ENCODE measurements at regions of chr5 and their contacts with region 1.

Region 1: DNA sequence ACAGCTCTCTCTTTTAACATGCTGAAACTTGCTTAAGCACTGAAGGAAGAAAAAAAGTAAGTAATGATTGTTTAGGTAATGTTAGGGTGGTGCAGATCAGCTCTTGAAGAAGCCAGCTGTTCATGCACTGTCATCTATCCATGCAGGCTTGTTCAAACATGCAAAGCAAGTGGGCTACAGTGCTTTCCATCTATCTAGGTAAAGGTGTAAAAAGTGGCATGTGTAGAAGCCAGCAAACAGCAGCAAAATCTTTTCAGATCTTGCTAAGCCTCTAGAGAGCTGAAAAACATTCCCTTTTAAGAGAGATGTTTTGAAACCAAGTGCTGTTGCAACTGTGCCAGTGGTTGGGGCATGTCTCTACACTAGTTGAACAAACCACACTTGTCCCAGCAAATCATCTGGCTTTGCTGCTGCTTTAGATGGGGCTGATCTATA is 214.4 kb downstream of the EFNA5 start:
- DNase-seq: no peak
- H3K4me3 Mint-ChIP-seq: peak overlapping the region; percentile 24
- H3K27ac Mint-ChIP-seq: peak overlapping the region; percentile 88
- H3K4me1 Mint-ChIP-seq: peaks cover 77% of the 10 kb centered on the region
- H3K27me3 Mint-ChIP-seq: no peaks in the 10 kb centered on the region
- CTCF ChIP-seq: no peak

Region 2: DNA sequence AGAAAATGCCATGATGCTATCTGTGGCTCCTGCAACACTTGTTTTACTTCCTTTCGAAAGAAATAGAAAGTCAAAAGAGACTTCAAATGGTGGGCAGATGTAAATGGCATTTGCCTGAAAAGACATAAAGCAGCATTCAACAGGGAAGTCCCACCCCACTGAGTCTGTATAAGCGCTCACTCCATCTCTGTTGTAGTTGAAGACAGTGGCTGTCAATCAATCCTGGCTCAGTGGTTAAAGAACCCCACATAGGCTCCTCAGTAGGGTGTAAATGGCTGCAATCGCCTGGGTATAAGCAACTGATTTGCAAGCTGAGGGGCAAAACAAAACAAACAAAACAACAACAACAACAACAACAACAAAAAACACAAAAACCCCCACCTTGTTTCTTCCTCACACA is 55.7 kb after region 1 on chr5:
- CTCF ChIA-PET with region 1: no interaction called
- intact Hi-C with region 1: no loop called
- DNase-seq: no peak
- H3K4me3 Mint-ChIP-seq: no peak overlapping the region
- H3K27ac Mint-ChIP-seq: peak overlapping the region; percentile 73
- H3K4me1 Mint-ChIP-seq: peaks cover 61% of the 10 kb centered on the region
- H3K27me3 Mint-ChIP-seq: no peaks in the 10 kb centered on the region
- CTCF ChIP-seq: no peak

Region 3: GRCh38 chr5:107665036-107665570 is 208.8 kb after region 1 on chr5:
- CTCF ChIA-PET with region 1: interaction called, 3 read pairs
- intact Hi-C with region 1: loop called (anchors 2 kb)
- DNase-seq: no peak
- H3K4me3 Mint-ChIP-seq: peak overlapping the region; percentile 66
- H3K27ac Mint-ChIP-seq: peak overlapping the region; percentile 89
- H3K4me1 Mint-ChIP-seq: peaks cover 42% of the 10 kb centered on the region
- H3K27me3 Mint-ChIP-seq: no peaks in the 10 kb centered on the region
- CTCF ChIP-seq: no peak